ENCODE measurements at regions of chr5 and their contacts with region 1.

Region 1: GRCh38 chr5:55146543-55147151 is 13.3 kb upstream of the GPX8 start:
- DNase-seq: peak; percentile 89
- ATAC-seq: peak; percentile 67
- H3K4me3 Mint-ChIP-seq: no peak overlapping the region
- H3K27ac Mint-ChIP-seq: no peak overlapping the region
- H3K4me1 Mint-ChIP-seq: peaks cover 13% of the 10 kb centered on the region
- H3K27me3 Mint-ChIP-seq: peaks cover 6% of the 10 kb centered on the region
- CTCF ChIP-seq: peak; percentile 98

Region 2: GRCh38 chr5:54905943-54906537 is 240.6 kb before region 1 on chr5:
- CTCF ChIA-PET with region 1: interaction called, 111 read pairs
- POLR2A ChIA-PET with region 1: interaction called, 6 read pairs
- intact Hi-C with region 1: loop called (anchors 2 kb)
- DNase-seq: peak; percentile 90
- ATAC-seq: no peak
- H3K4me3 Mint-ChIP-seq: no peak overlapping the region
- H3K27ac Mint-ChIP-seq: no peak overlapping the region
- H3K4me1 Mint-ChIP-seq: peaks cover 17% of the 10 kb centered on the region
- H3K27me3 Mint-ChIP-seq: peaks cover 36% of the 10 kb centered on the region
- CTCF ChIP-seq: peak; percentile 88

Region 3: DNA sequence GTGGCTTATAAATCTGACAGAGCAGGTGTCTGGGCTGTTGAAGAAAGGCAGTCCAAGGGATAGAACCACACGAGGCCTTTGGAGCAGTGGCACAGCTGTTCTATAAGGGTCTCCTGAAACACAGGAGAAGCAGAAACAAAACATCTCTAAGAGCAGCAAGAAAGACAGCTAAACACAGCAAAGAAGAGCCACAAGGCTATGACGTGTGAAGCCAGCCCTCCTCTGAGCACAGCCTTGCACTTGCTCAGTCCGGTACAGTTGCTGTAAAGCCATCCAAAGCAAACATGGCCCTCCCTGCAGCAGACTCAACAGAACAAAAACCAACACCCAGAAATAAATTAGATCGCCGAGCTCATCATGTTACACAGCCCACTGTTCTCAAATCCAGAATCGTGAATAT is 125.2 kb before region 1 on chr5:
- CTCF ChIA-PET with region 1: interaction called, 10 read pairs
- POLR2A ChIA-PET with region 1: no interaction called
- intact Hi-C with region 1: no loop called
- DNase-seq: no peak
- ATAC-seq: no peak
- H3K4me3 Mint-ChIP-seq: no peak overlapping the region
- H3K27ac Mint-ChIP-seq: peak overlapping the region; percentile 6
- H3K4me1 Mint-ChIP-seq: peaks cover 35% of the 10 kb centered on the region
- H3K27me3 Mint-ChIP-seq: no peaks in the 10 kb centered on the region
- CTCF ChIP-seq: no peak

Region 4: DNA sequence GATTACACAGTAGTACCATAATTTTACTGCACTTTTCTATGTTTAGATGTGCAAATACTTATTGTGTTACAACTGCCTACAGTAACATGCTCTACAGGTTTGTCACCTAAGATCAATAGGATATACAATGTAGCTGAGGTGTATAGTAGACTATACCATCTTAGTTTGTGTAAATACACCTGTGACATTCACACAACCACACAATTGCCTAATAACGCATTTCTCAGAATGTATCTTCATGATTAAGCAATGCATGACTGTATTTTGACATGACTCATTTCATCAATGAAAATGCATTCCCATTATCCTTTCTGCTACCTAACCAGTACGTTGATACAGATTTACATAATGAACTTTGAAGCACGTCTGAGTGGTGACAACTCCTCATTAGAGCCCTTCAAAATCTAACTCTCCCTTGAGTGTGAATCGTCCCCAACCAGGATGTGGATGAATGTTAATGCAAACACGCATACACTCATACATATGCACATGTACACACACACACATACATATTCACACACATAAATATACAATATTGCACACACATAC is 94.2 kb before region 1 on chr5:
- CTCF ChIA-PET with region 1: no interaction called
- POLR2A ChIA-PET with region 1: no interaction called
- intact Hi-C with region 1: no loop called
- DNase-seq: no peak
- ATAC-seq: no peak
- H3K4me3 Mint-ChIP-seq: no peak overlapping the region
- H3K27ac Mint-ChIP-seq: no peak overlapping the region
- H3K4me1 Mint-ChIP-seq: no peaks in the 10 kb centered on the region
- H3K27me3 Mint-ChIP-seq: no peaks in the 10 kb centered on the region
- CTCF ChIP-seq: no peak

Region 5: DNA sequence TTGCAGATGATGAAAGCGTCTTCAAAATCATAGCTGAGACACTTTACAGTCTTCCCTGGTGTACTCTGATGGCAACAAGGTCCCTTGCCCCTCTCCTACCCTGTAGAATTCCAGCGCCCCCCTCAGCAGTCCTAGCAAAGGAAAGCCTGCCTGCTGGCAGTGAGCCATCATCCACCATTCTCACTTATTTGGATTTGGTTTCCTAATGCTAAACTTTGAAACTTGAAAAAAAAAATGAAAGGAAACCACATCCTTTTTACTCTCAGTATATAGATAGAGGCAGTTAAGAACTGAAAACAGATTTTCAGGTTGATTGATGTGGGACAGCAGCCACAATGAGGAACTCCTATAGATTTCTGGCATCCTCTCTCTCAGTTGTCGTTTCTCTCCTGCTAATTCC is 44.3 kb before region 1 on chr5 and contains the start of gene GZMA:
- CTCF ChIA-PET with region 1: interaction called, 4 read pairs
- POLR2A ChIA-PET with region 1: no interaction called
- intact Hi-C with region 1: loop called (anchors 5 kb)
- DNase-seq: peak; percentile 36
- ATAC-seq: peak; percentile 64
- H3K4me3 Mint-ChIP-seq: peak within 1 kb of the TSS; percentile 59
- H3K27ac Mint-ChIP-seq: peak within 1 kb of the TSS; percentile 84
- H3K4me1 Mint-ChIP-seq: peaks cover 78% of the 10 kb centered on the region
- H3K27me3 Mint-ChIP-seq: peaks cover 10% of the 10 kb centered on the region
- CTCF ChIP-seq: no peak
- total RNA-seq, gene GZMA: 17.8 to 18.2 TPM

Region 6: GRCh38 chr5:55159763-55160492 is 13.3 kb after region 1 on chr5 and contains the start of gene GPX8:
- CTCF ChIA-PET with region 1: interaction called, 15 read pairs
- POLR2A ChIA-PET with region 1: interaction called, 3 read pairs
- intact Hi-C with region 1: no loop called
- DNase-seq: peak; percentile 20
- ATAC-seq: peak; percentile 37
- H3K4me3 Mint-ChIP-seq: no peak within 1 kb of the TSS
- H3K27ac Mint-ChIP-seq: no peak within 1 kb of the TSS
- H3K4me1 Mint-ChIP-seq: no peaks in the 10 kb centered on the region
- H3K27me3 Mint-ChIP-seq: peaks cover 20% of the 10 kb centered on the region
- CTCF ChIP-seq: peak; percentile 67
- total RNA-seq, gene GPX8: not detected

Region 7: GRCh38 chr5:55180016-55180415 is 33.4 kb after region 1 on chr5:
- CTCF ChIA-PET with region 1: no interaction called
- POLR2A ChIA-PET with region 1: no interaction called
- intact Hi-C with region 1: no loop called
- DNase-seq: no peak
- ATAC-seq: no peak
- H3K4me3 Mint-ChIP-seq: no peak overlapping the region
- H3K27ac Mint-ChIP-seq: no peak overlapping the region
- H3K4me1 Mint-ChIP-seq: peaks cover 15% of the 10 kb centered on the region
- H3K27me3 Mint-ChIP-seq: peaks cover 59% of the 10 kb centered on the region
- CTCF ChIP-seq: no peak

Region 8: DNA sequence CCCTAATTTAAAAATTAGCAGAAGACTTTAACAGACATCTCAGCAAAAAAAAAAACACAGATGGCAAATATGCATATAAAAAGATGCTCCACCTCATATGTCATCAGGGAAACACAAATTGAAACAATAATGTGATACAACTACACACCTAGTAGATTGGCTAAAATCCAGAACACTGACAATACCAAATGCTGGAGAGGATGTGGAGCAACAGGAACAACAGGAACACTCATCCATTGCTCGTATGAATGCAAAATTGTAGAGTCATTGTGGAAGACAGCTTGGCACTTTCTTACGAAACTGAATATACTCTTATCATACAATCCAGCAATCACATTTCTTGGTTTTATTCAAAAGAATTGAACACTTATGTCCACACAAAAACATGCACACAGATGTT is 58.4 kb after region 1 on chr5:
- CTCF ChIA-PET with region 1: no interaction called
- POLR2A ChIA-PET with region 1: no interaction called
- intact Hi-C with region 1: no loop called
- DNase-seq: no peak
- ATAC-seq: no peak
- H3K4me3 Mint-ChIP-seq: no peak overlapping the region
- H3K27ac Mint-ChIP-seq: no peak overlapping the region
- H3K4me1 Mint-ChIP-seq: peaks cover 2% of the 10 kb centered on the region
- H3K27me3 Mint-ChIP-seq: peaks cover 25% of the 10 kb centered on the region
- CTCF ChIP-seq: no peak

Region 9: DNA sequence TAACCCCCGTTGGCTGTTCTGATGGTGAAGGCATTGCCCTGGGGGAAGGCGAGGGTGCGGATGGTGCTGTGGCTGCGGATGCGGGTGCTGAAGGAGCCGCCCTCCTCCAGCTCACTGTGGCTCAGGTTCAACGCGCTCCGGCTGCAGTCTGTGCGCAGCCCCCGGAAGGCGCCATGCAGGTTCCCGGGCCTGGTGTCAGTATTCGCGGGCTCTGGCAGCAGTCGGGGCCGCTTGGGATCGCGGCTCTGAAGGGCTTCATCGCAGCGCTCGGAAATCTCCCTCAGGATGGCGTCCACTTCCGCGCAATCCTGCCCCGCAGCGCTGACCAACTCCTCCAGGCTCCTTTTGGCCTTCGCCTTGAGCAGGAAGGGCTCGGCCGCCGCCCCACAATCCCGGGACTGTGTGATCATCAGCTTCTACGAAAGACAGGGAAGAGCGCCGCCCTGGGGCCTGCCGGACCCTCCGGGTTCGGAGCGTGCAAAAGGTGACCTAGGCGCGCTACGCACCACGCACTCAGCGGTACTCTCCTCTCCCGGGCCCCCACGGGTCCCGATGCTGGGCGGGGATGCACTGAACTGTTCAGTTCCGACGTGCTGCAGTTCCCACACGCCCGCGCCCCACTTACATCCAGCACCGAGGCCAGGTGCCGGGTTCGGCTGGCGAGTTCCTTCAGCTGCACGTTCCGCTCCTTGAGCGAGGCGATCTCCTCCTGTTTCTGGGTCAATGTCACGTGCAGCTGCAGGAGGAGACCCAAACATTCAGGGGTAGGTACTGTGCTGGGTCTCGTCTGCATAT is 73.9 kb after region 1 on chr5:
- CTCF ChIA-PET with region 1: no interaction called
- POLR2A ChIA-PET with region 1: no interaction called
- intact Hi-C with region 1: no loop called
- DNase-seq: peak; percentile 36
- ATAC-seq: peak; percentile 46
- H3K4me3 Mint-ChIP-seq: peak overlapping the region; percentile 63
- H3K27ac Mint-ChIP-seq: no peak overlapping the region
- H3K4me1 Mint-ChIP-seq: peaks cover 25% of the 10 kb centered on the region
- H3K27me3 Mint-ChIP-seq: peaks cover 65% of the 10 kb centered on the region
- CTCF ChIP-seq: no peak